Caco-2 (cell line): ENCODE measurements at regions of chr11 and their contacts with region 1.

Region 1: DNA sequence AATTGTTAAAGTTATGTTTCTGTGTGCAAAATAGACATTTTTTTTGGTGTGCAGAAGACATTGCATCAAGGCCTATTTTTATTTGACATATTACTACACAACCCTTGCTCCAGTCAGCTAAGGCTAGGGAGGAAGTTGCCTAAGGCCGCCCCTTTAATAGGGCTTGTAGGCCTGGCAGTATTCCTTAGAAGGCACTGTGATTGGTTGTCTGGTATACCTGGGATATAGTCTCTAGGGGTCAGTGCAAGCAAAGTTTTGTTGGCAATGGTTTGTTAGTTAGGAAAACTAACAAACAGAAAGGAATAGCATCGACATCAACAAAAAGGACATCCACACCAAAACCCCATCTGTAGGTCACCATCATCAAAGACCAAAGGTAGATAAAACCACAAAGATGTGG is 16.9 kb downstream of the CCDC15 start:
- DNase-seq: peak in 1 of 2 experiments; percentile 40
- H3K4me3 ChIP-seq: no peak overlapping the region
- H3K4me3 Mint-ChIP-seq: no peak overlapping the region
- H3K27ac Mint-ChIP-seq: no peak overlapping the region
- H3K4me1 ChIP-seq: no peaks in the 10 kb centered on the region
- H3K4me1 Mint-ChIP-seq: no peaks in the 10 kb centered on the region
- H3K27me3 ChIP-seq: no peaks in the 10 kb centered on the region
- H3K27me3 Mint-ChIP-seq: no peaks in the 10 kb centered on the region
- CTCF ChIP-seq: no peak

Region 2: GRCh38 chr11:125055107-125055715 is 84.3 kb after region 1 on chr11:
- CTCF ChIA-PET with region 1: no interaction called
- POLR2A ChIA-PET with region 1: no interaction called
- intact Hi-C with region 1: loop called (anchors 5 kb)
- DNase-seq: peak in 1 of 2 experiments; percentile 64
- H3K4me3 ChIP-seq: no peak overlapping the region
- H3K4me3 Mint-ChIP-seq: peak overlapping the region; percentile 11
- H3K27ac Mint-ChIP-seq: no peak overlapping the region
- H3K4me1 ChIP-seq: peaks cover 32% of the 10 kb centered on the region
- H3K4me1 Mint-ChIP-seq: peaks cover 17% of the 10 kb centered on the region
- H3K27me3 ChIP-seq: no peaks in the 10 kb centered on the region
- H3K27me3 Mint-ChIP-seq: no peaks in the 10 kb centered on the region
- CTCF ChIP-seq: no peak

Region 3: GRCh38 chr11:125082611-125083311 is 111.8 kb after region 1 on chr11:
- CTCF ChIA-PET with region 1: no interaction called
- POLR2A ChIA-PET with region 1: no interaction called
- intact Hi-C with region 1: no loop called
- DNase-seq: peak in 1 of 2 experiments; percentile 50
- H3K4me3 ChIP-seq: no peak overlapping the region
- H3K4me3 Mint-ChIP-seq: no peak overlapping the region
- H3K27ac Mint-ChIP-seq: peak overlapping the region; percentile 21
- H3K4me1 ChIP-seq: peaks cover 4% of the 10 kb centered on the region; the same call in 1 of the 2 replicates
- H3K4me1 Mint-ChIP-seq: no peaks in the 10 kb centered on the region
- H3K27me3 ChIP-seq: no peaks in the 10 kb centered on the region
- H3K27me3 Mint-ChIP-seq: no peaks in the 10 kb centered on the region
- CTCF ChIP-seq: no peak